GM12878 (cell line): ENCODE measurements at regions of chr19 and their contacts with region 1.

Region 1: GRCh38 chr19:4791170-4792018 is at the start of gene FEM1A:
- DNase-seq: peak; percentile 100
- ATAC-seq: peak; percentile 98
- H3K4me3 ChIP-seq: peak within 1 kb of the TSS; percentile 76
- H3K27ac ChIP-seq: peak within 1 kb of the TSS; percentile 93
- H3K4me1 ChIP-seq: peaks cover 22% of the 10 kb centered on the region
- H3K27me3 ChIP-seq: no peaks in the 10 kb centered on the region
- CTCF ChIP-seq: peak; percentile 98 to 99 (median 99); a peak in 5 of 6 replicates
- EP300 ChIP-seq: no peak
- POLR2A ChIP-seq: peak; percentile 89
- RAD21 ChIP-seq: peak; percentile 72
- polyA plus RNA-seq, gene FEM1A: 0.27 to 0.31 TPM

Region 2: DNA sequence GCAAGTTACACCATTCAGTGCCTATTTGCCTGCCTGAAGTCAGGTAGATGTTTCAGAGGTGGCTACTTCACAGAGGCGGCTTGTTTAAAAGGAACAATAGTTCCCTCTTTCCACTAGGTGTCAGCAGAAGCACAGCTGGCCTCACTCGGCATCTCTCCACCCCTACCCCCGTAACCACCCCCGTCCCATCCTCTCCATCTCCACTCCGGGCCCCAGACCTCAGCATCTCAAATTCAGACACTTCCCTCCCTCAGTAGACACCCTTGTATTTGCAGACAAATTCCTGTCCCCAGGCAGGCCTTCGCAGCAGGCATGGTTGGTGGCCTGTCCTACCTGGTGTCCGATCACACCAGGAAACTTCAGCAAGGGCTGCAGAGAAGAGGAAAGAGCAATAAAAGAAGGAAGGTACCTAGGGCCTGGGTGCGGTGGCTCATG is 58.7 kb before region 1 on chr19:
- CTCF ChIA-PET with region 1: interaction called, 160 read pairs
- POLR2A ChIA-PET with region 1: interaction called, 21 read pairs
- RAD21 ChIA-PET with region 1: interaction called, 65 read pairs
- SMC1A ChIA-PET with region 1: interaction called, 87 read pairs
- in situ Hi-C with region 1: loop called (anchors 5 kb)
- intact Hi-C with region 1: loop called (anchors 1 kb)
- DNase-seq: no peak
- ATAC-seq: peak; percentile 97
- H3K4me3 ChIP-seq: no peak overlapping the region
- H3K27ac ChIP-seq: no peak overlapping the region
- H3K4me1 ChIP-seq: no peaks in the 10 kb centered on the region
- H3K27me3 ChIP-seq: no peaks in the 10 kb centered on the region
- CTCF ChIP-seq: peak; percentile 67 to 89 (median 79)
- EP300 ChIP-seq: no peak
- POLR2A ChIP-seq: no peak
- RAD21 ChIP-seq: peak; percentile 75

Region 3: GRCh38 chr19:4759388-4760284 is 31.8 kb before region 1 on chr19:
- CTCF ChIA-PET with region 1: interaction called, 25 read pairs
- POLR2A ChIA-PET with region 1: no interaction called
- RAD21 ChIA-PET with region 1: interaction called, 18 read pairs
- SMC1A ChIA-PET with region 1: interaction called, 18 read pairs
- in situ Hi-C with region 1: no loop called
- intact Hi-C with region 1: no loop called
- DNase-seq: peak; percentile 49
- ATAC-seq: peak; percentile 99
- H3K4me3 ChIP-seq: peak overlapping the region; percentile 47; the same call in 1 of the 2 replicates
- H3K27ac ChIP-seq: no peak overlapping the region
- H3K4me1 ChIP-seq: peaks cover 4% of the 10 kb centered on the region; the same call in 1 of the 2 replicates
- H3K27me3 ChIP-seq: no peaks in the 10 kb centered on the region; a peak in 2 of 4 replicates
- CTCF ChIP-seq: no peak
- EP300 ChIP-seq: peak in 1 of 2 experiments; percentile 12; a peak in 1 of 4 replicates
- POLR2A ChIP-seq: no peak
- RAD21 ChIP-seq: no peak

Region 4: GRCh38 chr19:4803736-4804695 is 12.6 kb after region 1 on chr19:
- CTCF ChIA-PET with region 1: interaction called, 18 read pairs
- POLR2A ChIA-PET with region 1: no interaction called
- RAD21 ChIA-PET with region 1: interaction called, 10 read pairs
- SMC1A ChIA-PET with region 1: interaction called, 15 read pairs
- in situ Hi-C with region 1: no loop called
- intact Hi-C with region 1: no loop called
- DNase-seq: no peak
- ATAC-seq: peak; percentile 95
- H3K4me3 ChIP-seq: no peak overlapping the region
- H3K27ac ChIP-seq: no peak overlapping the region
- H3K4me1 ChIP-seq: peaks cover 6% of the 10 kb centered on the region
- H3K27me3 ChIP-seq: no peaks in the 10 kb centered on the region
- CTCF ChIP-seq: peak; percentile 86 to 93 (median 90)
- EP300 ChIP-seq: no peak
- POLR2A ChIP-seq: no peak
- RAD21 ChIP-seq: peak; percentile 66

Region 5: DNA sequence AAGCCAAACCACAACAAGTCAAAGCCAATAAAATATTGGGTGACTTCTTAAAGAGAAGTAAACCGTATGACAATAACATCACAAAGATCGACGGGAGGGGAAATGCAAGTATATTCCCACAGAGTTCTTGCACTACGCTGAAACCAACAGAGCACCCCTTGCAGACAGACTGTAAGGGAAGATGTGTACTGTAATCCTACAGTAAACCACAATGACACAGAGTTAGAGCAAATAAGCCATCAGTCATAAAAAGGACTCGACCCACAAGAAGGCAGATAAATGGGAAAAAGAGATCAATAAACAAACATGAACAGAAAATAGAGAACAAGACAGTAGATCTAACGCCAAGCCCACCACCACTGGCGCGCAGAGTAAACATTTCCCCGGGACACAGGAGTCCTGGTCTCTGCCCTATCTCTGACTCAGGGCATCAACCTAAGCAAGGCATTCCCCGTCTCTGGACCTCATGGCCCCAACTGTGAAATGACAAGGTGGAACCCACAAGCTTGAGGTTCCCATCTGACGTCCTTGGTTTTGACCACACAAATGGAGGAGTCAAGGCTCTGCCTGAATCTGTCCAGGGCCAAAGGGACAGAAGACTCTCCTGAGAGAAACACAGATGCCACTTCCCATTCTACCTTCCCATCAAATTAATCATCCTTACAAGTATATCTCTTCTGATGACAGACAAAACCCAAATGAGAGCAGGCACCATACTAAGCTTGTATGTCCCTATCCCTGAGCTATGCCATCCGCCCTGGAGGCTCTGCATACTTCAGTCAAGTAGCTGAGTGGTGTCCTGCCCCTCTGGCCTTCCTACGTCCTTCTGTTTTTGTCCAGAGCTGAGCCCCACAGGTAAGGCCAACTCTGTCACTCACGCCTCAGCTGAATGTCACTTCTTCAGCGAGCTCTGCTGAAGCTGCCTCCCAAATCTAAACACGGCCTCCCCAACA is 816.2 kb after region 1 on chr19:
- CTCF ChIA-PET with region 1: no interaction called
- POLR2A ChIA-PET with region 1: no interaction called
- RAD21 ChIA-PET with region 1: no interaction called
- SMC1A ChIA-PET with region 1: no interaction called
- in situ Hi-C with region 1: no loop called
- intact Hi-C with region 1: no loop called
- DNase-seq: no peak
- ATAC-seq: no peak
- H3K4me3 ChIP-seq: no peak overlapping the region
- H3K27ac ChIP-seq: no peak overlapping the region
- H3K4me1 ChIP-seq: no peaks in the 10 kb centered on the region
- H3K27me3 ChIP-seq: no peaks in the 10 kb centered on the region
- CTCF ChIP-seq: no peak
- EP300 ChIP-seq: no peak
- POLR2A ChIP-seq: no peak
- RAD21 ChIP-seq: no peak